Endothelial cell of umbilical vein (primary cell): ENCODE measurements at regions of chr1 and their contacts with region 1.

Region 1: GRCh38 chr1:101309334-101310311 is 72.8 kb downstream of the S1PR1 start:
- DNase-seq: peak; percentile 79
- H3K4me3 ChIP-seq: peak overlapping the region in 2 of 3 experiments; percentile 27 to 63
- H3K27ac ChIP-seq: no peak overlapping the region
- H3K4me1 ChIP-seq: peaks cover 6% of the 10 kb centered on the region
- H3K27me3 ChIP-seq: peaks cover 0 to 1% of the 10 kb centered on the region in 2 experiments
- CTCF ChIP-seq: peak; percentile 87 to 90
- POLR2A ChIP-seq: no peak

Region 2: DNA sequence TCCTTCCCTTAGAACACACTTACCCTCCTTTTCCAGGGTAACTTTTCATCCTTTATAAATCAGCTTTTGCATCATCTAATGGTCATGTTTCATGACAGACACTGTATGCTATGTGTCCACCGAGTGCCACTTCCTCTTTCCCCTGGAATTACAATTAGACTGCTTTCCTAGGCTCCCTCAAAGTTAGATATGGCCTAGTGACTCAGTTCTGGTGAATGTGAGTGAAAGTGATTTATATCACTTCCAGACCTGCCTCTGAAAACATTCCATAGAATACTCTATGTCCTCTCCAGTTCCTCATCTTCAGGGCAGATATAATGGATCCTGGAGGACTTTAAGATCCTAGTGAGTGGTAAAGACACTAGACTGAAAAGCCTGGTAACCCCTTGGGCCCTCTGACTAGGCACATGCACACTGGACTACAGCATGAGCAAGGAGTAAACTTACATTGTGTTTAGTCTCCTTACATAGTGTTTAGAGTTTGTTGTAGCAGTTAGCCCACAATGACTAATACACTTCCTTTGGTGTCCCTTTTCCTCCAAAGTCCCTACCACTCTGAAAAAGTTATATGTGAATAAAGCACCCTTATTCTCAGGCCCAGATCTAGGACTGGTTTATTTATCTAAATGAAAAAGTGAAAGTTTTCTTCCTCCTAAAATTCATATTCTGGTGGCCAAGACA is 712.4 kb before region 1 on chr1:
- CTCF ChIA-PET with region 1: no interaction called
- POLR2A ChIA-PET with region 1: no interaction called
- dilution Hi-C with region 1: no loop called
- intact Hi-C with region 1: loop called (anchors 10 kb)
- DNase-seq: peak; percentile 95
- H3K4me3 ChIP-seq: no peak overlapping the region
- H3K27ac ChIP-seq: peak overlapping the region; percentile 93
- H3K4me1 ChIP-seq: peaks cover 28% of the 10 kb centered on the region
- H3K27me3 ChIP-seq: no peaks in the 10 kb centered on the region
- CTCF ChIP-seq: no peak
- POLR2A ChIP-seq: no peak

Region 3: GRCh38 chr1:101293461-101294051 is 16.1 kb before region 1 on chr1:
- CTCF ChIA-PET with region 1: interaction called, 75 read pairs
- POLR2A ChIA-PET with region 1: interaction called, 3 read pairs
- dilution Hi-C with region 1: no loop called
- intact Hi-C with region 1: no loop called
- DNase-seq: no peak
- H3K4me3 ChIP-seq: no peak overlapping the region
- H3K27ac ChIP-seq: peak overlapping the region; percentile 28
- H3K4me1 ChIP-seq: peaks cover 47% of the 10 kb centered on the region
- H3K27me3 ChIP-seq: no peaks in the 10 kb centered on the region
- CTCF ChIP-seq: no peak
- POLR2A ChIP-seq: no peak

Region 4: DNA sequence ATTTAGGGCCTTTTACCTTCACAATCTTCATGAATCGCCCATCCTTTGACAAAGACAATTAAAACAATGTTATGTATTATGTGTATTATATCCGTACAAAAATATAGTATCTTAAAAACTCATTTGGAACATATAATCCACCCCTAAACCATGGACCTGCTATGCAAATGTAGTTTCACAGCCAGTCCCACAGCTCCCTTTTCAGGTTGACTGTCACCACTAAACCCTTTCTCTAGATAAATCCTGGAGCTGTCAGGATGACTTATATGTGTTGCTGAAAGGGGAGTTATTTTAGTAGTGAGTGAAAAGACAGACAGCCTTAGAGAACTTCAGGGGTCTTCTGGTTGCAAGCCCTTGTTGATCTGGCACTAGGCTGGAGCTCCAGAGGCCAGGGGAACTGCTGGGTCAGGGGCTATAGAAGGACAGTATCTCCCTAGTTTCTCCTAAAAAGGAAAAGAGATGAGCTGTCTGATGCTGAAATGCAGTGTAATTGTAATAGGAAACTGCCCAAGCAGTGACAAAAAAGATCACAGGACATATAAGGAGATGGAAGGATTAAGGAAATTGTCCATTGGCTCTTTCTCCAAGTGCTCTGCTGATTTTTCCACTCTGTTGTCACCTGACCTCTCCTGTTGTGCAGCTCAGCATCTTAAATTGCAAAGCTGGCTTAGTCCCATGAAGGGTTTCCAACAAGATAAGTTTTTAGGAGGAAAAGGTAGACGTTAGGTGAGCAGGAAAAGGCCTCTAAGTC is 54.9 kb after region 1 on chr1:
- CTCF ChIA-PET with region 1: interaction called, 132 read pairs
- POLR2A ChIA-PET with region 1: no interaction called
- dilution Hi-C with region 1: no loop called
- intact Hi-C with region 1: no loop called
- DNase-seq: no peak
- H3K4me3 ChIP-seq: no peak overlapping the region
- H3K27ac ChIP-seq: no peak overlapping the region
- H3K4me1 ChIP-seq: peaks cover 15% of the 10 kb centered on the region
- H3K27me3 ChIP-seq: no peaks in the 10 kb centered on the region
- CTCF ChIP-seq: no peak
- POLR2A ChIP-seq: no peak

Region 5: DNA sequence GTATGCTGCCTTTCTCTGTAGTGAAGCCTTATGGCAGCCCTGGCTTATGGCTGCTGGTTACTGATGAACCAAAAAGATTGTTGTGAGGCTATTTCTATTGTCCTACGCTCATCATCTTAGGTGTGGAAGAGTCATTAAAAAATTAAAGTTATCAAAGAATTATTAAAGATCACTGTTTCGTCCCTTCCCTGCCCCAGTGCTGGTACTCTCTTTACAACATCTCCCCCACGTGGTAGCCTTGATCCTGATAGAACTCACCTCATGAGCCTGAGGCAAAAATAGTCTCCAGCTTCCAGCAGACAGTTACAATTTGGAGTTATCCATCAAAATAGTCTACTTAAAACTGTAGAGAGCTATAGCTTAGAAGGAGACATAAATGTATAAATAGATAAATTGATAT is 128.7 kb after region 1 on chr1:
- CTCF ChIA-PET with region 1: interaction called, 265 read pairs
- POLR2A ChIA-PET with region 1: no interaction called
- dilution Hi-C with region 1: no loop called
- intact Hi-C with region 1: loop called (anchors 1 kb)
- DNase-seq: peak; percentile 59
- H3K4me3 ChIP-seq: no peak overlapping the region
- H3K27ac ChIP-seq: no peak overlapping the region
- H3K4me1 ChIP-seq: no peaks in the 10 kb centered on the region
- H3K27me3 ChIP-seq: peaks cover 6 to 8% of the 10 kb centered on the region in 2 experiments
- CTCF ChIP-seq: peak; percentile 44 to 55
- POLR2A ChIP-seq: no peak

Region 6: GRCh38 chr1:101506541-101507164 is 197.0 kb after region 1 on chr1:
- CTCF ChIA-PET with region 1: interaction called, 12 read pairs
- POLR2A ChIA-PET with region 1: no interaction called
- dilution Hi-C with region 1: no loop called
- intact Hi-C with region 1: no loop called
- DNase-seq: peak; percentile 47
- H3K4me3 ChIP-seq: no peak overlapping the region
- H3K27ac ChIP-seq: no peak overlapping the region
- H3K4me1 ChIP-seq: no peaks in the 10 kb centered on the region
- H3K27me3 ChIP-seq: peaks cover 3 to 12% of the 10 kb centered on the region in 2 experiments
- CTCF ChIP-seq: peak; percentile 54 to 56
- POLR2A ChIP-seq: no peak